ENCODE measurements at regions of chr10 and their contacts with region 1.

Region 1: GRCh38 chr10:112955582-112956421 is 5.8 kb downstream of the TCF7L2 start:
- DNase-seq: no peak
- H3K4me3 Mint-ChIP-seq: peak overlapping the region; percentile 80
- H3K27ac Mint-ChIP-seq: peak overlapping the region; percentile 86
- H3K4me1 Mint-ChIP-seq: peaks cover 48% of the 10 kb centered on the region
- H3K27me3 Mint-ChIP-seq: no peaks in the 10 kb centered on the region
- CTCF ChIP-seq: no peak

Region 2: DNA sequence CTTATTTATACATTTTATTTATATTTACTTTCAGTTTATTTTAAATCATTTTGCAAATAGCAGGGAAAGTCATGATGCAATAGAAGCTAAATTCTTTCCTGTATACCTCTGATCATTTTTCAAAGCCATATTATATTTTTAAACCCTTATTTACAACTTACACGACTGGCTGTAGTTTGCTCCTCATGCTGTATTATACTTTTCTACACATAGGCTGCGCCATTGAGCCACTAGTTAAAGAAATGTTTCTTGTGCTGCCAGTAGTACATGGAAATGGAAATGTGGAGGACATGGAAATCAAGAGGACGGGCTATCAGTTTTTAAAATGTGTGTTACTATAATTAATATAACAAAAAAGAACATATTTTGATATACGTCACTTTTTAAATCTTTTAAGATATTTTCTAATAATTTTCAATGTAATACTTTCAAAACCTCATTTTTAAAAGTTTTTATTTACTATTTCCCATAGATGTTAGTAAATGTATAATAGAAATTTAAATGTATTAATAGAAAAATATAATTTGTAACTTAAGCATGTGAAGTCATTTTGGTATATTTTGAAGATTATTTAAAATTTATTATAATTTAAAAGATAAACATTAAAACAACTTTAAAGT is 390.3 kb before region 1 on chr10:
- CTCF ChIA-PET with region 1: no interaction called
- intact Hi-C with region 1: loop called (anchors 2 kb)
- DNase-seq: peak; percentile 49
- H3K4me3 Mint-ChIP-seq: no peak overlapping the region
- H3K27ac Mint-ChIP-seq: no peak overlapping the region
- H3K4me1 Mint-ChIP-seq: no peaks in the 10 kb centered on the region
- H3K27me3 Mint-ChIP-seq: no peaks in the 10 kb centered on the region
- CTCF ChIP-seq: no peak

Region 3: DNA sequence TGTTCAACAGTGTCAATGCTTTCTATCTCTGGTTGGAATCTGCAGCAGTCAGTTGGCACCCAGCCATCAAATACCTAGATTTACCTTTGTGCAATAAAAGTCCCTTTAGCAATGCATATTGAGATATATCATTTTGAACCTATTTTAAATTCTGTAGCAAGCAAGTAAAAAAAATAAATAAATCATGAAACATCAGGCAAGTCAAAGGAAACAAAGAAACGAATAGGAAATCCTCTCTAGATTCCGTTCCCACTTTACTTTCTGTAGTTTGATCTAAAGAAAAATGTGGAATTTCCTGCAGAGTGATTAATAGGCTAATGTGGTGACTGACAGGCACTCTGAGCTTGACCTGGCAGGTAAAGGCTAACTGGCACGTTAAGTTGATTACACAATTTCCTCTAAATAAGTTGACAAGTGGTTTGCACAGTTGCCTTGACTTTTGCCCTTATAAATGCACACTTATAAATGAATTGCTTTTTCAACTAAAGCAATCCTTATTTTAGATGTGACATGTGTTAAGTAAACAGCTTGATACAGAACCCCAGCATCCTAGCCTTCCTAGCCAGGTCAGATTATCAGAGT is 213.9 kb before region 1 on chr10:
- CTCF ChIA-PET with region 1: no interaction called
- intact Hi-C with region 1: loop called (anchors 2 kb)
- DNase-seq: peak; percentile 31
- H3K4me3 Mint-ChIP-seq: peak overlapping the region; percentile 12
- H3K27ac Mint-ChIP-seq: no peak overlapping the region
- H3K4me1 Mint-ChIP-seq: peaks cover 32% of the 10 kb centered on the region
- H3K27me3 Mint-ChIP-seq: no peaks in the 10 kb centered on the region
- CTCF ChIP-seq: no peak

Region 4: GRCh38 chr10:112803961-112804401 is 151.8 kb before region 1 on chr10:
- CTCF ChIA-PET with region 1: interaction called, 4 read pairs
- intact Hi-C with region 1: loop called (anchors 5 kb)
- DNase-seq: peak; percentile 30
- H3K4me3 Mint-ChIP-seq: peak overlapping the region; percentile 37
- H3K27ac Mint-ChIP-seq: peak overlapping the region; percentile 85
- H3K4me1 Mint-ChIP-seq: peaks cover 51% of the 10 kb centered on the region
- H3K27me3 Mint-ChIP-seq: no peaks in the 10 kb centered on the region
- CTCF ChIP-seq: no peak

Region 5: GRCh38 chr10:113073549-113074189 is 117.9 kb after region 1 on chr10:
- CTCF ChIA-PET with region 1: no interaction called
- intact Hi-C with region 1: loop called (anchors 5 kb)
- DNase-seq: peak; percentile 87
- H3K4me3 Mint-ChIP-seq: peak overlapping the region; percentile 16
- H3K27ac Mint-ChIP-seq: peak overlapping the region; percentile 67
- H3K4me1 Mint-ChIP-seq: peaks cover 40% of the 10 kb centered on the region
- H3K27me3 Mint-ChIP-seq: no peaks in the 10 kb centered on the region
- CTCF ChIP-seq: no peak

Region 6: DNA sequence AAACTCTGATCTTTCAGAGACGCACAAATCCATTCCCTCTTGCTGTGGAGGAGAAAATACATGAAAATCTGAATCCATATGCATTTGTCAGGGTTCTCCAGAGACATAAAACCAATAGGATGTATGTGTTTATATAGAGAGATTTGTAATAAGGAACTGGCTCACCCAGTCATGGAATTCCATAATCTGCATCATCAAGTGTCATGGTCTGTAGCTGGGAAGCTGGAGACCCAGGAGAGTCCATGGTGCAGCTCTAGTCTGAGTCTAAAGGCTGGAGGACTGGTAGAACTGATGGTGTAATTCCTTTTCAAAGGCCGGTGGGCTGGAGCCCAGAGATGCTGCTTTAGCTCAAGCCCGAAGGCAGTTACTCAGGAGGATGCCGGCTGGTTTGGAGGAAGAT is 128.2 kb after region 1 on chr10:
- CTCF ChIA-PET with region 1: no interaction called
- intact Hi-C with region 1: no loop called
- DNase-seq: no peak
- H3K4me3 Mint-ChIP-seq: no peak overlapping the region
- H3K27ac Mint-ChIP-seq: no peak overlapping the region
- H3K4me1 Mint-ChIP-seq: peaks cover 42% of the 10 kb centered on the region
- H3K27me3 Mint-ChIP-seq: no peaks in the 10 kb centered on the region
- CTCF ChIP-seq: no peak

Region 7: GRCh38 chr10:113126229-113127201 is 170.7 kb after region 1 on chr10:
- CTCF ChIA-PET with region 1: no interaction called
- intact Hi-C with region 1: loop called (anchors 2 kb)
- DNase-seq: peak; percentile 72
- H3K4me3 Mint-ChIP-seq: peak overlapping the region; percentile 68
- H3K27ac Mint-ChIP-seq: no peak overlapping the region
- H3K4me1 Mint-ChIP-seq: peaks cover 34% of the 10 kb centered on the region
- H3K27me3 Mint-ChIP-seq: no peaks in the 10 kb centered on the region
- CTCF ChIP-seq: peak; percentile 62

Region 8: DNA sequence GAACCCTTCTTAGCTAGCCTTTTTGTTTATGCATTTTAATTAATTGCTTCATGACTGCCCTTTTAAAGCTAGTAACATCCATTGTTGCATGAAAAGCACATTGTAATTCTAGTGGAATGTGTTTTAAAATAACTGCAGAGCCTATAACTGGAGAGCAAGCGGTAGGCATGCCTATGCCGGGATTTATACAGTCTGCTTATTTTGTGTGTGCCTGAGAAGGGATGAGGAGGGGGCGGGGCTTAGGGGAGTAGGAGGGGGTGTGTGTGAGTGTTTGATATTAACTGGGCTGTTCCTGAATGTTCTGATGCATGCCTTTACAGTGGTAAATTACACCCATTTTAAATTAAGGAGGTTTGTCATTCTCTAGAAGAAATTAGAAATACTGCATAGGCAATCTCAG is 202.4 kb after region 1 on chr10:
- CTCF ChIA-PET with region 1: no interaction called
- intact Hi-C with region 1: no loop called
- DNase-seq: no peak
- H3K4me3 Mint-ChIP-seq: no peak overlapping the region
- H3K27ac Mint-ChIP-seq: no peak overlapping the region
- H3K4me1 Mint-ChIP-seq: no peaks in the 10 kb centered on the region
- H3K27me3 Mint-ChIP-seq: no peaks in the 10 kb centered on the region
- CTCF ChIP-seq: no peak